ENCODE measurements at regions of chr7 and their contacts with region 1.

Region 1: GRCh38 chr7:80060218-80060806 is 74.3 kb upstream of the GNAI1 start:
- DNase-seq: no peak
- H3K4me3 Mint-ChIP-seq: no peak overlapping the region
- H3K27ac Mint-ChIP-seq: no peak overlapping the region
- H3K4me1 Mint-ChIP-seq: no peaks in the 10 kb centered on the region
- H3K27me3 Mint-ChIP-seq: no peaks in the 10 kb centered on the region

Region 2: GRCh38 chr7:80453699-80454340 is 393.5 kb after region 1 on chr7:
- CTCF ChIA-PET with region 1: no interaction called
- POLR2A ChIA-PET with region 1: no interaction called
- intact Hi-C with region 1: loop called (anchors 5 kb)
- DNase-seq: no peak
- H3K4me3 Mint-ChIP-seq: no peak overlapping the region
- H3K27ac Mint-ChIP-seq: no peak overlapping the region
- H3K4me1 Mint-ChIP-seq: no peaks in the 10 kb centered on the region
- H3K27me3 Mint-ChIP-seq: no peaks in the 10 kb centered on the region

Region 3: GRCh38 chr7:80659120-80660055 is 599.1 kb after region 1 on chr7:
- CTCF ChIA-PET with region 1: interaction called, 4 read pairs
- POLR2A ChIA-PET with region 1: no interaction called
- intact Hi-C with region 1: loop called (anchors 1 kb)
- DNase-seq: no peak
- H3K4me3 Mint-ChIP-seq: no peak overlapping the region
- H3K27ac Mint-ChIP-seq: no peak overlapping the region
- H3K4me1 Mint-ChIP-seq: no peaks in the 10 kb centered on the region
- H3K27me3 Mint-ChIP-seq: no peaks in the 10 kb centered on the region